Esophagus muscularis mucosa (tissue), 4 donors: ENCODE measurements at regions of chr7 and their contacts with region 1.

Region 1: GRCh38 chr7:151110941-151111645 is 24.8 kb downstream of the AGAP3 start:
- DNase-seq: peak; percentile 95
- H3K4me3 ChIP-seq: no peak overlapping the region
- H3K27ac ChIP-seq: peak overlapping the region in 2 of 4 donors; percentile 5 to 20
- H3K4me1 ChIP-seq: peaks cover 17 to 58% (median 46%) of the 10 kb centered on the region in 4 donors
- H3K27me3 ChIP-seq: no peaks in the 10 kb centered on the region
- CTCF ChIP-seq: peak; percentile 88 to 96 (median 88)
- EP300 ChIP-seq: no peak
- POLR2A ChIP-seq: no peak

Region 2: GRCh38 chr7:151028131-151028947 is 82.8 kb before region 1 on chr7 and contains the start of gene ABCB8:
- intact Hi-C with region 1: loop called (anchors 5 kb)
- DNase-seq: peak; percentile 99
- H3K4me3 ChIP-seq: peak within 1 kb of the TSS; percentile 69 to 91 (median 74)
- H3K27ac ChIP-seq: peak within 1 kb of the TSS; percentile 80 to 88 (median 84)
- H3K4me1 ChIP-seq: peaks cover 7 to 27% (median 19%) of the 10 kb centered on the region in 4 donors
- H3K27me3 ChIP-seq: peaks cover 0 to 1% (median 0%) of the 10 kb centered on the region in 4 donors
- CTCF ChIP-seq: peak; percentile 42 to 54 (median 49)
- EP300 ChIP-seq: no peak
- POLR2A ChIP-seq: peak; percentile 48
- total RNA-seq, gene ABCB8: 13.1 to 25.3 (median 19.9) TPM